Posterior cingulate gyrus (tissue), 11 donors: ENCODE measurements at regions of chr18 and their contacts with region 1.

Region 1: GRCh38 chr18:50878345-50879301 is at the start of gene ME2:
- DNase-seq: peak; percentile 87 to 99 (median 94)

Region 2: GRCh38 chr18:50819728-50820378 is 58.8 kb before region 1 on chr18 and contains the start of gene MRO:
- intact Hi-C with region 1: loop called (anchors 5 kb)
- DNase-seq: peak; percentile 81 to 97 (median 86)

Region 3: GRCh38 chr18:50967714-50968661 is 89.4 kb after region 1 on chr18 and contains the start of gene ELAC1:
- intact Hi-C with region 1: loop called (anchors 1 kb)
- DNase-seq: peak; percentile 55 to 96 (median 68)

Region 4: DNA sequence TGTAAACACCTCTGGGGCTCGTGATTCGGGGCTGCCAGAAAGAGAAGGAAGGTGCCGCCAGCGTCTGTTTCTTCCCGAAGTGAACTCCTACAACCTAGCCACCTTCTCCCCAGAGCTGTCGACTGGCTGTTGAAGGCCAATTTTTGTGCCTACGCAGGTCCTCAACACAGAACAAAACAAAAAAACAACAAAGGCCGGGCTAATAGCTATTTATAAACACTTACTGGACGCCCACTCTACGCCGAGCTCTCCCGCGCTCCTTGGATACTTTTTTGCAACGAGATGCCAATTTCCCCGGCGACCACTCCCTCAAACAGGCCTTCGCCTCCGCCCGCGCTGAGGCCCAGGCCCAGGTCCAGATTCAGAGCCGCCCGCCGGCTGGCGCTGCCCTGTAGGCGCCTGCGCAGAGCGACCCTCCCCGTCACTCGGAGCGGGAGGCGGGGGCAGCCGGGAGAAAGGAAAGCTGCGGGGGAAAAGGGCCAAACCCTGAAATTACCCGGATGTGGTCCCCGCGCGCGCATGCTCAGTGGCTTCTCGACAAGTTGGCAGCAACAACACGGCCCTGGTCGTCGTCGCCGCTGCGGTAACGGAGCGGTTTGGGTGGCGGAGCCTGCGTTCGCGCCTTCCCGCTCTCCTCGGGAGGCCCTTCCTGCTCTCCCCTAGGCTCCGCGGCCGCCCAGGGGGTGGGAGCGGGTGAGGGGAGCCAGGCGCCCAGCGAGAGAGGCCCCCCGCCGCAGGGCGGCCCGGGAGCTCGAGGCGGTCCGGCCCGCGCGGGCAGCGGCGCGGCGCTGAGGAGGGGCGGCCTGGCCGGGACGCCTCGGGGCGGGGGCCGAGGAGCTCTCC is 151.3 kb after region 1 on chr18 and contains the start of gene SMAD4:
- intact Hi-C with region 1: loop called (anchors 5 kb)
- DNase-seq: peak; percentile 90 to 99 (median 96)

Region 5: DNA sequence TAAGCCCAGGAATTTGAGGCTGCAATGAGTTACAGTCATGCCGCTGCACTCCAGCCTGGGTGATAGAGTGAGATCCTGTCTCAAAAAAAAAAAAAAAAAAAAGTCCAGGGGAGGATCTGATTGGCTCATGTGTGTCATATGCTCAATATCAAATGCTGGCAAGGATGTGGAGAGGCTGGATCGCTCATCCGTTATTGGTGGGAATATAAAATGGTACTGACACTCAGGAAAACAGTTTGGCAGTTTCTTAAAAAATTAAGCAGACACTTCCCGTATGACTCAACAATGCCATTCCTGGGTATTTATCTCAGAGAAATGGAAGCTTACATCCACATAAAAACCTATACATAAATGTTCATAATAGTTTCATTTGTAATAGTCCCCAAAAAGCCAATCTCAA is 249.9 kb after region 1 on chr18:
- intact Hi-C with region 1: no loop called
- DNase-seq: no peak

Region 6: GRCh38 chr18:51197661-51198424 is 319.2 kb after region 1 on chr18 and contains the start of gene MEX3C:
- intact Hi-C with region 1: loop called (anchors 10 kb)
- DNase-seq: peak; percentile 98 to 100 (median 99)